ENCODE measurements at regions of chr22 and their contacts with region 1.

Region 1: DNA sequence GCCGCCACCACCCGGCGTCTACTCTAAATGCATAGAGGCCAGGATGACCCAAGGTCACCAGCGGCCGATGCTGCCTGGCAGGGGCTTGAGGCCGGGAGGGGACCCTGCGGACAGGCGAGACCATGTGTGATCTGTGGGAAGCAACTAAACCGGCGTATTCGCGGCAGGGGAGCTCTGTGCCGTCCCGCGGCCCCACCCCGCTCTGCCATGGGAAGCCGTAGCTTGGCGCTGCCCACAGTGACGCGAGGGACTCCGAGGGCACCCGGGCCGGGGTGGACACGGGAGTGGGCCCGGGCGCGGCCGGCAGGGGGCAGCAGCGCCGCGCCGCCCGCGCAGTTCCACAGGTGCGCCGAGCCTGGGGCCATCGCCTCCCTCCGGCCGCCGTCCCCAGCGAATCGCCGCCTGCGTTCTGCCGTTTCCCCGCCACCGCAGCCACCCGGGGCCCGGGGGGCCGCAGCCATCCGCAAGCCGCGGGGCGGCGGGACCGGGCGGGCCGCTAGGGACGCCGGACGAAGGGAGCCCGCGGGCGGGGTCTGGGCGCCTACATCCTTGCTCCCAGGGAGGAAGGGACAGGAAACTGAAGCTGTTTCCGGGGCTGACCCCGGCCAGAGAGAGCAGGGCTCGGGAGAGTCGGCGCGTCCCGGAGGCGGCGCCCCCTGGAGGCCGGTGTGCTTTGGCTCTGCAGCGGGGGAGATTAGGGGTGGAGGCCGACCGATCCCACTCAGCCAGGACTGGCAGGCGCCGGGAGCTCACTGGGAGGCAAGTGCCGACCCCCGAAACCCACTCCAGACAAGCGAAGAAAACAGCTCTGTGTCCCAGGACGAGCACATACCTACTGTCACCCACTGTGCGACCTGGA is 12.5 kb upstream of the HDHD5 start:
- DNase-seq: peak; percentile 77 to 84
- ATAC-seq: peak; percentile 96
- H3K4me3 ChIP-seq: peak overlapping the region; percentile 64
- H3K27ac ChIP-seq: peak overlapping the region; percentile 97
- H3K4me1 ChIP-seq: no peaks in the 10 kb centered on the region
- CTCF ChIP-seq: peak; percentile 79
- EP300 ChIP-seq: no peak
- POLR2A ChIP-seq: peak; percentile 38
- RAD21 ChIP-seq: peak; percentile 17 to 59; a peak in 4 of 5 replicates

Region 2: GRCh38 chr22:17077255-17077654 is 94.3 kb before region 1 on chr22:
- CTCF ChIA-PET with region 1: interaction called, 31 read pairs
- POLR2A ChIA-PET with region 1: no interaction called
- DNase-seq: no peak
- ATAC-seq: no peak
- H3K4me3 ChIP-seq: no peak overlapping the region
- H3K27ac ChIP-seq: no peak overlapping the region
- H3K4me1 ChIP-seq: peaks cover 12% of the 10 kb centered on the region; the same call in 2 of the 3 replicates
- CTCF ChIP-seq: no peak
- EP300 ChIP-seq: no peak
- POLR2A ChIP-seq: no peak
- RAD21 ChIP-seq: no peak

Region 3: DNA sequence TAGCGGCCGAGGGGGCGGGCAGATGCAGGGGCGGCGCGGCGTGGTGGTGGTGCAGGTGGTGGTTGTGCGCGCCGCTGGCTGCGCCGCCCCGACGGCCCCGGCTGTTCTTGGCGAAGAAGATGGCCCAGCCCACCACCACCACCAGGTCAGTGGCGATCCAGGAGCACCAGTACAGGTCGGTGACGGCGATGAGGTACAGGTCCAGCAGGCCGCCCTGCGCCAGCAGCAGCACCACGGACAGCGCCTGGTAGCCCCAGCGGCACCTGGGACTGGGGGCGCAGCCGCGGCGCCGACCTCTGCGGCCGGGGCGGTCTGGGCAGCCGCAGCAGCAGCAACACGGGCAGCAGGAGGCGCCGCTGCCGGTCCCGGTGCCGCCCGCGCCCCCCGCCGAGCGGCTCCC is 51.3 kb before region 1 on chr22:
- CTCF ChIA-PET with region 1: interaction called, 10 read pairs
- POLR2A ChIA-PET with region 1: interaction called, 5 read pairs
- DNase-seq: peak in 1 of 2 experiments; percentile 27
- ATAC-seq: peak; percentile 63 to 89
- H3K4me3 ChIP-seq: peak overlapping the region; percentile 44
- H3K27ac ChIP-seq: no peak overlapping the region
- H3K4me1 ChIP-seq: no peaks in the 10 kb centered on the region
- CTCF ChIP-seq: no peak
- EP300 ChIP-seq: no peak
- POLR2A ChIP-seq: no peak
- RAD21 ChIP-seq: no peak

Region 4: DNA sequence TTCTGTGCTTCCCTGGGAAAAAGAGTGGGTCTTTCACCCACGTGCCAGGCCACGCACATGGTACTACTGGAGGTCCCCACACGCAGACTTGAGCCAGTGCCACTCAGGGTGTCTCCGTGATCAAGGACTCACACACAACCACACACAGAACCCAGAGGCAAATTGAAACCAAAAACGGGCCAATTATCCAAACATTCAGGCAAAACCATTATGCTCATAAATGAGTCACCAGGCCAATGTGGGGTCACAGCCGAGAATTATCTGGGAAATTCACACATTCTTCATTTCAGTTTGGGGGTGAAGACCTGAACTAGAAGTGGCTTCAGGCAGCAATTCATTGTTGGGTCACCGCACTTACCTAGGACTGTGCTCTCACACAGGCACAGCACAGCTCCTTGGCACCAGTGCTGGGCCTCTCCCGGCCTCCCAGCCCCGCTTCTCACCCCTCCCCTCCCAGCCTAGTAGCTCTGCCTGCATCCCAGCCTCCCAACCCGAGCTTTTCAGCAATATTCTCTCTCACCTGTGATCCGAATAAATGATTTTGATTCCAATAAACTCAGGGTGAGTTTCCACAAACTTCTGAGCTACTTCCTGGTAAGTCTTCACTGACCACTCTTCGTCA is 19.7 kb after region 1 on chr22:
- CTCF ChIA-PET with region 1: interaction called, 20 read pairs
- POLR2A ChIA-PET with region 1: interaction called, 5 read pairs
- DNase-seq: no peak
- ATAC-seq: no peak
- H3K4me3 ChIP-seq: no peak overlapping the region
- H3K27ac ChIP-seq: no peak overlapping the region
- H3K4me1 ChIP-seq: 0 out of 3 replicates have a peak, but pooled peaks cover 4% of the 10 kb centered on the region
- CTCF ChIP-seq: no peak
- EP300 ChIP-seq: no peak
- POLR2A ChIP-seq: no peak
- RAD21 ChIP-seq: no peak

Region 5: GRCh38 chr22:17213976-17214375 is 42.4 kb after region 1 on chr22:
- CTCF ChIA-PET with region 1: interaction called, 12 read pairs
- POLR2A ChIA-PET with region 1: no interaction called
- DNase-seq: peak in 1 of 2 experiments; percentile 24
- ATAC-seq: peak in 1 of 2 experiments; percentile 55; a peak in 1 of 6 replicates
- H3K4me3 ChIP-seq: no peak overlapping the region
- H3K27ac ChIP-seq: no peak overlapping the region
- H3K4me1 ChIP-seq: no peaks in the 10 kb centered on the region
- CTCF ChIP-seq: no peak
- EP300 ChIP-seq: no peak
- POLR2A ChIP-seq: no peak
- RAD21 ChIP-seq: no peak

Region 6: GRCh38 chr22:17501679-17502285 is 330.2 kb after region 1 on chr22:
- CTCF ChIA-PET with region 1: interaction called, 52 read pairs
- POLR2A ChIA-PET with region 1: interaction called, 51 read pairs
- DNase-seq: peak; percentile 33 to 67
- ATAC-seq: peak; percentile 93 to 94
- H3K4me3 ChIP-seq: no peak overlapping the region
- H3K27ac ChIP-seq: no peak overlapping the region
- H3K4me1 ChIP-seq: no peaks in the 10 kb centered on the region
- CTCF ChIP-seq: peak; percentile 69
- EP300 ChIP-seq: no peak
- POLR2A ChIP-seq: no peak
- RAD21 ChIP-seq: peak; percentile 78 to 82

Measured in A549 (cell line).